HepG2 (cell line): ENCODE measurements at regions of chr14 and their contacts with region 1.

Region 1: DNA sequence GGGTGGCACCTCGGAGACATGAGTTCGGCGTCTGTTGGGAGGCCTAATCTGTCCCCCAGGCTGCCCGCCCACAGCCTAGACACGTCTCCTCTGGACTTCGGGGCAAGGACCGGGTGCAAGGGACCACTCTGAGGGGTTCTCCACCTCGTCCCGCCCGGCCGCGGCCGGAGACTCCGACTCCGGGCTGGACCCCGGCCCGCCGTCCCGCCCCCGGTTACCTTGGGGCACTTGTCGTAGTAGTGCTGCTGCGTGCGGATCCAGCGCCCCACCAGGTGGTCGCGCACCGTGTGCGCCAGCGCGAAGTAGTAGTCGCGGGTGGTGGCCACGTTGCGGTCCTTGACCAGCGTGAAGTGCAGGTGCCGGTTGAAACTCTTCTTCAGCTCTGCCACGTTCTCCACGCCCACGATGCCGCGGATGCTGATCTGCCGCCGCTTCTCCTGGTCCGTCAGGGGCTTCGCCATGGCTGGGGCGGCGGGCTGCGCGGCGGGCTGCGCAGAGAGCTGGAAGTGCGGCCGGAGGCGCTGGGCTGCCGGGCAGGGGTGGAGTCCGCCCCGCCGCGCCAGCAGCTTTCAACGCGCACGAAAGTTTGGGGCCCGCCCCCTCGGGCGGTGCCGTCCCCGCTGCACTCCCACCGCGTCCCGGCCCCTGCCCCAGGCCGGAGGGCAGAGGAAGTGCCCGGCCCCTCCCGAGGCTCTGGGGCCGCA is at the start of gene PYGL:
- DNase-seq: peak; percentile 55
- ATAC-seq: peak; percentile 88
- H3K4me3 ChIP-seq: peak within 1 kb of the TSS; percentile 84 to 92 (median 91)
- H3K27ac ChIP-seq: peak within 1 kb of the TSS; percentile 99
- H3K4me1 ChIP-seq: peaks cover 47% of the 10 kb centered on the region
- H3K27me3 ChIP-seq: no peaks in the 10 kb centered on the region
- CTCF ChIP-seq: peak; percentile 61
- EP300 ChIP-seq: no peak; a peak in 1 of 4 replicates
- POLR2A ChIP-seq: peak; percentile 65 to 89
- RAD21 ChIP-seq: peak; percentile 23
- total RNA-seq, gene PYGL: 110 and 138 TPM in 2 replicates

Region 2: DNA sequence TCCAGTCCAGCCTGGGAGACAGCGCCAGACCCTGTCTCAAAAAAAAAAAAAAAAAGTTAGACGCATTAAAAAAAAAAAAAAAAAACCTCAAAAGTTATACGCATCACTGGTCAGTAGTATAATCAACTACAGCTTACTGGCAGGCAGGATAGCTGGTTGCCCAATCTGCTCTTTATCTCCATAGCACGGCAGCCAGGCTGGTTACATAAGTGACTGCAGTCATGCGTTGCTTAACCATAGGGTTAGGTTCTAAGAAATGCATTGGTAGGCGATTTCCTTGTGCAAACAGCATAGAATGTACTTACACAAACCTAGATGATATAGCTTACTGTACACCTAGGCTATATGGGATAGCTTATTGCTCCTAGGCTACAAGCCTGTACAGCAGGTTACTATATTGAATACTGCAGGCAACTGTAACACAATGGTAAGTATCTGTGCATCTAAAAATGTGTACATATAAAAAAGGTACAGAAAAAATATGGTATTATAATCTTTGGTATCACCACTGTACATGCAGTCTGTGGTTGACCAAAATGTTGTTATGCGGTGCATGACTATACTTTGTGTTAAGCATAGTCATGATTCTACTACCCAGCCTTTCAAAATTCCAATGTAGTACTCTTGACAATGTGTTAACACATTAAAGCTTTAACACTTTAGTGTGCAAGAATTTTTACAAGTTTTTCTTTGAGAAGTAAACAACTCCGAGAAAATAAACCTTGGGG is 640.2 kb before region 1 on chr14:
- CTCF ChIA-PET with region 1: no interaction called
- POLR2A ChIA-PET with region 1: no interaction called
- in situ Hi-C with region 1: no loop called
- intact Hi-C with region 1: no loop called
- DNase-seq: peak; percentile 93
- ATAC-seq: peak; percentile 99
- H3K4me3 ChIP-seq: no peak overlapping the region
- H3K27ac ChIP-seq: no peak overlapping the region
- H3K4me1 ChIP-seq: peaks cover 23% of the 10 kb centered on the region
- H3K27me3 ChIP-seq: no peaks in the 10 kb centered on the region
- CTCF ChIP-seq: no peak
- EP300 ChIP-seq: peak; percentile 28 to 77; a peak in 2 of 4 replicates
- POLR2A ChIP-seq: no peak
- RAD21 ChIP-seq: no peak

Region 3: DNA sequence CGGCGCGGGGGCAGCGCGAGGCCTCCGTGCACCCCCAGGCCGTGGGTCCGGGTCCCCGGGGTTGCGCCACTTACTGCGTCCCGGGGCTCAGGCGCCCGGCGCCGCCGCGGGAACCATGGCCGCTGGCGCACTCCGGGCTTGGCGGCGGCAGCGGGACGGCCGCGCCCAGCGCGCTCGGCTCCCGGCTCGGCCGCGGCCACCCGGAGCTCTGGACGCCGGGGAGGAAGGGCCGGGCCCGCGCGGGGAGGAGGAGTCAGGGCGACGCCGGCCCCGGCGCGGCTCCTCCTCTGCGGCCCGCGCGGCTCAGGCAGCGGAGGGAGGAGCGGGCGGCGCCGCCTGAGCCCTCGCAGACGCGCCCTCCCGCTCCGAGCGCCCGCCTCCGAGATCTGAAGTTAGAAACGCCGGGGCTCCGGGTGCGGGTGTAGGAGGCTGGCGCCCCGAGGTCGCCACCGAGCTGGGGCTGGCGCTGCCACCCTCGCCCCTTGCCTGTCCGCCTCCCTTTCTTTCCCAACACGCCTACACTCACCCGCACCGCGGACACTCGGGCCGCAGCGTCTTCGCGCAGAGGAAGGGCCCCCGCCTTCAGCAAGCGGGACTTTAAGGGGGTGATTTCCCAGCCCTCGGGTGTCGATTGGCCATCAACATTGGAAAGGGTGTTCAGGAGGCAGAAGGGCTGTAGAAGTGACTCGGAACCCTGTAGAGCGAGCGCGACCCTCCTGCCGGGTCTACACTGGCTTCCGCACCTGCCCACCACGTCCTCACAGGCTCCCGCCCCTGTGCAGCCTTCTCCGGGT is 113.0 kb before region 1 on chr14 and contains the start of gene NIN:
- CTCF ChIA-PET with region 1: no interaction called
- POLR2A ChIA-PET with region 1: interaction called, 13 read pairs
- in situ Hi-C with region 1: no loop called
- intact Hi-C with region 1: loop called (anchors 5 kb)
- DNase-seq: peak; percentile 33
- ATAC-seq: peak; percentile 89
- H3K4me3 ChIP-seq: peak within 1 kb of the TSS; percentile 77 to 86 (median 77)
- H3K27ac ChIP-seq: no peak within 1 kb of the TSS
- H3K4me1 ChIP-seq: peaks cover 83% of the 10 kb centered on the region
- H3K27me3 ChIP-seq: peaks cover 0 to 17% of the 10 kb centered on the region in 2 experiments; a peak in 1 of 5 replicates
- CTCF ChIP-seq: no peak
- EP300 ChIP-seq: no peak
- POLR2A ChIP-seq: no peak
- RAD21 ChIP-seq: peak; percentile 38; the same call in 1 of the 2 replicates
- total RNA-seq, gene NIN: 9.7 and 11.6 TPM in 2 replicates

Region 4: DNA sequence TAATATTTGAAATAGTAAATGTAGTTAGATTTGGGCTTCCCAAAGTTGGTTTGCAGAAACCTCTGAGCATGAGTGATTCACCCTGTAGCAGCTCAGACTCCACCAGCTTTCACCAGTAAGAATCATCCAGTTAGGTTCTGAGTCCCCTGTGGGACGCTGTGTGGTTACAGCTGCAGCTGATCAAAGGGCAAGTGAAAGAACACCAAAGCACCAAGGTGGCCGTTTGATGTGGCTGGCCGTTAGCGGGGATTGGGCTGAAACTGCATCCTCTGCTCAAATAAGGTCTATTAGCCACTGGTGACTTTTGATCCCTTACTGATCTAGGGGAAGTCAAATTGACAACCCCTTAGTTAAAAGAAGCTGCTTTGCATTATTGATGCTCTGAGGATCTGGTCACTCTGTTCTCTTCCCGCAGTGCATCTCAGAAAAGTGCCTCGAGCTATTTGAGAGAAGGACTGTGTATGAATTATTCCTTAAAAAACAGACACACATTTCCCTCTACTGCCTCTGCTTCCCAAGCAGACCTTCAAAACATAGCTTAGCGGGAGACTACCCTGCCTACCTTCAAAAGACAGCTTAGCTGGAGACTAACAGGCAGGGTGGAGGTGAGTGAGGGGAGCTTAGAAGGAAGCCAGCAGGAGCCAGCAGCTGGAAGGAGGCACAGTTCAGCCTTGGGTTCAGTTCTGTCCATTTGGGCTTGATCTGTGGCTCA is 68.6 kb before region 1 on chr14:
- CTCF ChIA-PET with region 1: no interaction called
- POLR2A ChIA-PET with region 1: interaction called, 11 read pairs
- in situ Hi-C with region 1: no loop called
- intact Hi-C with region 1: no loop called
- DNase-seq: peak; percentile 96
- ATAC-seq: peak; percentile 97
- H3K4me3 ChIP-seq: peak overlapping the region in 2 of 3 experiments; percentile 34 to 59; a peak in 4 of 6 replicates
- H3K27ac ChIP-seq: peak overlapping the region; percentile 69
- H3K4me1 ChIP-seq: peaks cover 74% of the 10 kb centered on the region
- H3K27me3 ChIP-seq: no peaks in the 10 kb centered on the region
- CTCF ChIP-seq: no peak
- EP300 ChIP-seq: peak; percentile 57 to 90; a peak in 3 of 4 replicates
- POLR2A ChIP-seq: no peak
- RAD21 ChIP-seq: no peak

Region 5: DNA sequence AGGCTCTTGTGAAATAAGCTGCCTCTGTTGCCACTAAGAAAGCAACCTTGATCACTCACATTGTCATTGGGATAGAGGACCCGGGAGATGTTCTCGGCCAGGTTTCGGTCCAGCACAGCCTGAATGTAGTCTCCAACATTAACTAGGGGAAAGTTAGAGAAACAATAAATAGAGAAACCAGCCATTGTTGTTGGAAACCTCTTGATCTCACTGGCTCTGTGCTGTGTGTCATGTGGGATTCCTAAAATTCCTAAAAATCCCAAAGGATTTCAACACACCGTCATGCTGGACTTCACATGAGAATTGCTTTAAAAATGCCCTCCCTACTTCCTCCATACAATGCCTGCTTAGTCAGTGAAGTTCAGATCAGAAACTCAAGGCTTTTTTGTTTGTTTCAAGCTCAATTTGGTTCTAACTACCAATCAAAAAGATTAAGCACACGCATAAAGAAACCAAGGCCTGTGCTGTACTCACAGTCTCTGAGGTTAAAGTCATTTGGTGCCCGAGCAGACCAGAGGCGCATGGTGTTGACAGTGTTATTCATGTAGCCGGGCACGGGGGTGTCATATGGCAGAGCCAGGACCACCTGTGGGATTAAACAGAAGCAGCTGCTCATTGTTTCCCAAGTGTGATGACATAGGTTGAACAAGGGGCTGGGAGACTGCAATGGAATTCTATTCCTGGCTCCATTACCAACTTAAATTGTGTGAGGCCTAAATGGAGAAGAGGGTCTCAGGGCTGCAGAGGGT is 23.4 kb before region 1 on chr14:
- CTCF ChIA-PET with region 1: no interaction called
- POLR2A ChIA-PET with region 1: interaction called, 14 read pairs
- in situ Hi-C with region 1: no loop called
- intact Hi-C with region 1: no loop called
- DNase-seq: peak; percentile 90
- ATAC-seq: peak; percentile 89
- H3K4me3 ChIP-seq: peak overlapping the region in 1 of 3 experiments; percentile 6; a peak in 1 of 6 replicates
- H3K27ac ChIP-seq: peak overlapping the region; percentile 66
- H3K4me1 ChIP-seq: peaks cover 46% of the 10 kb centered on the region
- H3K27me3 ChIP-seq: no peaks in the 10 kb centered on the region
- CTCF ChIP-seq: no peak
- EP300 ChIP-seq: peak in 1 of 2 experiments; percentile 60; a peak in 2 of 4 replicates
- POLR2A ChIP-seq: no peak
- RAD21 ChIP-seq: no peak